CD4-positive, alpha-beta T cell (primary cell): ENCODE measurements at regions of chr1 and their contacts with region 1.

Region 1: DNA sequence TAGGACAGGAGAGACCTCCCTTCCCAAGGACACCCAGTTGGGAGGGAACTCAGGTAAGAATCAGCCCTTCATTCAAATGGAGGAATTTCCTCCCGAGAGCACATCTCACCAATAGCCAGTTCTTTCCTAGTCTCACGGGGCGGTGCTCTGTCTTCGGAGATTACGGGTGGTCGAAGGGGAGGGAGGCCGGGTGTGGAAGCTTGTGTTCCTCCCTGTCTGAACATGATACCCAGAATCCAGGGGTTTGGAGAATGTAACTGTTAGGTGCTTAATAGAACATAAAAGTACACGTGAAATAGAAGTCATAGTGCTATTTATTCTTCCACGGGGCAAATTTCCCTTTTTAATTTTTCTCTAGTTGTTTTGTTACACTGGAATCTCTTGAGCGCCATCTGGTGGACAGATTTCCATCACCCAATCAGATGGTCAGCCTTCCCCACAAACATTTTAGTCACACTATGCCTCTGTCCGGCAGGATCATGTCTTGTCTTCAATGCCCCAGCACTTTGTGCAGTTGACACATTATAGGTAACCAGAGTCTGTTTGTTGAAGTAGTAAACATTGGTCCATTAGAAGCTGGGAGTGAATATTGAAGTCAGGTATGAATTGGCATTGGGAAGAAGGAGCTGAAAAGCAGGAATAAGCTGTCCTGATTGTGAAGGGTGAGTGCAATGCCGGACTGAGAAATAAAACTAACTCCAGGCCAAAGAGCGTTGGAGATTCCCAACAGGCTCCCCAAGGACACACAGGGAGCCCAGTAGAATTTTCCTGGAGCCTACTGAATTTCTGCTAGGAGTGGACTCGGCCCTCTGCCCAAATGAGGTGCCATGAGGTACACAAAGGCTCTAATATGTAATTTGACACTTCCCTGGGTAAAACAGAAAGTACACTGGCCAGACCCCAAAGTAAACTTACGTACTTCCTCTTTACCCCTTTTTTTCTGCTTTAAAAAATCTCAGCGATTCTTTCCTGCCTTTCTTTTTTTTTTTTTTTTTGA is 27.6 kb upstream of the ZNF697 start:
- DNase-seq: peak; percentile 6 to 79 (median 46)
- ATAC-seq: no peak
- H3K4me3 ChIP-seq: peak overlapping the region; percentile 17
- H3K4me3 Mint-ChIP-seq: peak overlapping the region; percentile 52
- H3K27ac ChIP-seq: no peak overlapping the region
- H3K27ac Mint-ChIP-seq: no peak overlapping the region
- H3K4me1 ChIP-seq: peaks cover 5% of the 10 kb centered on the region
- H3K4me1 Mint-ChIP-seq: peaks cover 6% of the 10 kb centered on the region
- H3K27me3 ChIP-seq: peaks cover 4 to 15% of the 10 kb centered on the region in 2 experiments
- H3K27me3 Mint-ChIP-seq: peaks cover 28% of the 10 kb centered on the region
- CTCF ChIP-seq: peak; percentile 86

Region 2: DNA sequence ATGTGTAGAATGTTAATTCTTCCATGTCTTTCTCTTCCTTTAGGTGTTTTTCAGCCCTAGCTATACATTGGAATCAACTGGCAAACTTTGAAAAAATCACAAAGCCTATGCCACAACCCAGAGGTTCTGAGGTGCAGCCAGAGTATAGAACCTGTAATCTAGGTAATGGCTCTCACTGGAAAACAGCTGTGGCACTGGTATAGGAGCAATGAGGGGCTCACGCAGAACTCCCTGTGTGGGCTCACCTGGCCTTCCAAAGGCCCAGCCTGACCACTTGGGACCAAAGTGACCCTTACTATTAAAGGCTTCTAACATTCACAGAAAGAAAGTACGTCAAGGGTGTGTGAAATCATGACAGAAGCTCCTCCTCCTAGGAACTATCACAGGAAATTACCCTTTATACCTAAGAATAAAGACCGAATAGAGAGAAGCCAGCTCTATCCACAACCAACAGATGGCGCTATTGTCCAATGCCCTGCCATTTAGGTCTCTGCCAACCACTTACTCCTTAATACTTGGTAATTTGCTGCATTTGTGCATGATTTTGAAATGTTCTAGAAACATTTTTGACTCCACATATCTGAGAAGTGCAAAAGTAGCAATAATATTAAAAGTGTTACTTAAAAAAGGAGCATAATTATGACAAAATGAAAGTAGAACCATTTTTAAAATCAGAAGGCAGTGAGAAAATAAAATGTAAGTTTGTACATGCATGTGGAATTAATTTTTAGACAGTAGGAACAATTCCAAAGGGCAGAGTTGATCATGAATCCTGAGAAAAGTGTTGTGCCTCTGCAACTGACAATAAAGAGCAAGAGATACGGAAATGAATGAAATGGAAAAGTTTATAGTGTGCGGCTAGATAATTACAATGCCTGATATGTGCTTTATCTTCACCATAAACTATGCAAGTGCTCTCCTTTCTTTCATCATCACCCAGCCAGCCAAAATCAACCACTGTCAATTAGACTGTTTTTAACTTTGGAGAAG is 400.2 kb before region 1 on chr1:
- CTCF ChIA-PET with region 1: interaction called, 3 read pairs
- POLR2A ChIA-PET with region 1: no interaction called
- intact Hi-C with region 1: loop called (anchors 5 kb)
- DNase-seq: peak in 12 of 14 experiments; percentile 0 to 66 (median 8)
- ATAC-seq: peak; percentile 48
- H3K4me3 ChIP-seq: no peak overlapping the region
- H3K4me3 Mint-ChIP-seq: no peak overlapping the region
- H3K27ac ChIP-seq: no peak overlapping the region
- H3K27ac Mint-ChIP-seq: no peak overlapping the region
- H3K4me1 ChIP-seq: no peaks in the 10 kb centered on the region
- H3K4me1 Mint-ChIP-seq: no peaks in the 10 kb centered on the region
- H3K27me3 ChIP-seq: peaks cover 0 to 5% of the 10 kb centered on the region in 2 experiments
- H3K27me3 Mint-ChIP-seq: peaks cover 31% of the 10 kb centered on the region
- CTCF ChIP-seq: peak; percentile 68

Region 3: GRCh38 chr1:119544165-119544762 is 131.4 kb before region 1 on chr1:
- CTCF ChIA-PET with region 1: no interaction called
- POLR2A ChIA-PET with region 1: no interaction called
- intact Hi-C with region 1: no loop called
- DNase-seq: no peak
- ATAC-seq: no peak
- H3K4me3 ChIP-seq: no peak overlapping the region
- H3K4me3 Mint-ChIP-seq: no peak overlapping the region
- H3K27ac ChIP-seq: no peak overlapping the region
- H3K27ac Mint-ChIP-seq: no peak overlapping the region
- H3K4me1 ChIP-seq: no peaks in the 10 kb centered on the region
- H3K4me1 Mint-ChIP-seq: no peaks in the 10 kb centered on the region
- H3K27me3 ChIP-seq: no peaks in the 10 kb centered on the region
- H3K27me3 Mint-ChIP-seq: peaks cover 25% of the 10 kb centered on the region
- CTCF ChIP-seq: no peak

Region 4: DNA sequence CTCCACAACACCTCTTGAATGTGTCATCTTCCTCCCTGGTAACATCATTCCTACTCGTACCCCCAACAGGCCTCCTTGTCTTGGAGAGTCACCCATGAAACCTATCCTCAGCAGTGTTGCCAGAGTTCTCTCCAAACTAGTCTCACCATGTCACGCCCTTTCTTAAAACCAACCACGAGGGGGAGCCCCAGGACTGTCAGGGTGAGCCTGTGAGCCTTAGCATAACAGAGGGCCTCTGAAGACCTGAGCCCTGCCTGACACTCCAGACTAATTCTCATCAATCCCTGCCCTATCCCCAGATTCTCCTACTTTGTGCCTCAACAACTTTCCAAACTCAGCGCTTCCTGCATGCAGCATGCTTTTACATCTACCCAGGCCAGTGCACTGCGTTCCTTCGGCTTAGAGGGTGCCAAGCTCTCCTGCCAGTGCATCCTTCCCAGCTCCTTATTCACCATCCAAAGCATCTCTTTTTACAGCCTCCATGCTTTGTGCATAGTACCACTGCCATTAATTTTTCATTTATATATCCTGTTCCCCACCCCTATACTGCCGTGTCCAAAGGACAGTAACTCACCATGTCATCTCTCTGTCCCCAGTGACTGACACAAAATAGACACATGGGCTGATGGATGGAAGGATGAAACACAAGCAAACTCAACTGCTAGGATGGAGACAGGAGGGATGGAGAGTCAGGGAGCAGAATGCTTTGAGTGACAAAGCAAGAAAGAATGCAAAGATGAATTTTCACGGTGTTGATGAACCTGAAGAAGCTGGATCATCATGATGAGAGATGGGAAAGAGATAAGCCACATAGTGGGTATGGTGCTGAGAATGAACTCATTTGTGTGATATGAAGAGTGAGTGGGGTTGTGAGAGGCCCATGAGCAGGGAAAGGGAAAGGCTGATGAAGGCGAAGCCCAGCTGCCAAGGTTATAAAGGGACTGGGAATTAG is 61.6 kb before region 1 on chr1:
- CTCF ChIA-PET with region 1: interaction called, 3 read pairs
- POLR2A ChIA-PET with region 1: no interaction called
- intact Hi-C with region 1: loop called in 1 of 2 experiments (anchors 5 kb)
- DNase-seq: peak; percentile 15 to 70 (median 33)
- ATAC-seq: no peak
- H3K4me3 ChIP-seq: no peak overlapping the region
- H3K4me3 Mint-ChIP-seq: no peak overlapping the region
- H3K27ac ChIP-seq: no peak overlapping the region
- H3K27ac Mint-ChIP-seq: no peak overlapping the region
- H3K4me1 ChIP-seq: no peaks in the 10 kb centered on the region
- H3K4me1 Mint-ChIP-seq: no peaks in the 10 kb centered on the region
- H3K27me3 ChIP-seq: no peaks in the 10 kb centered on the region
- H3K27me3 Mint-ChIP-seq: peaks cover 5% of the 10 kb centered on the region
- CTCF ChIP-seq: peak; percentile 53

Region 5: DNA sequence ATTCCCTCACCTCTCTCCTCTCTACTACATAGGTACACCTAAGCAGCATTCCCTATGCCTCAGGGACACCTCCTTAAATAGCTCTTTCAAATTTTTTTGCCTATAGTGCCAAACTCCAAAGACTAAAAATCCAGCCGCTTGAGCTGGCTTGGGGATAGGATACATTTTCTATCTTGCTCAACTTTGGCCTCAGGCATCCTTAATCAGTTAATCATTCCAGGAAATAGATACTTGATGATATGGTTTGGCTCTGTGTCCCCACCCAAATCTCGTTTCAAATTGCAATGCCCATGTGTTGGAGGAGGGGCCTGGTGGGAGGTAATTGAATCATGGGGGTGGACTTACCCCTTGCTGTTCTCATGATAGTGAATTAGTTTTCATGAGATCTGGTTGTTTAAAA is 24.7 kb after region 1 on chr1:
- CTCF ChIA-PET with region 1: no interaction called
- POLR2A ChIA-PET with region 1: no interaction called
- intact Hi-C with region 1: no loop called
- DNase-seq: no peak
- ATAC-seq: no peak
- H3K4me3 ChIP-seq: no peak overlapping the region
- H3K4me3 Mint-ChIP-seq: no peak overlapping the region
- H3K27ac ChIP-seq: no peak overlapping the region
- H3K27ac Mint-ChIP-seq: no peak overlapping the region
- H3K4me1 ChIP-seq: no peaks in the 10 kb centered on the region
- H3K4me1 Mint-ChIP-seq: no peaks in the 10 kb centered on the region
- H3K27me3 ChIP-seq: no peaks in the 10 kb centered on the region
- H3K27me3 Mint-ChIP-seq: peaks cover 44% of the 10 kb centered on the region
- CTCF ChIP-seq: no peak